Activated T-helper 1 cell treated with anti-CD3 and anti-CD28 coated beads, Interleukin-12 subunit alpha, Interleukin-12 subunit beta, Interleukin-2, Interleukin-4 antibody, amounts not matched to agents 30 ng/mL and 10 ng/mL and 1 ng/mL, durations not matched to agents 14 hours and 24 hours and 36 hours (primary cell): ENCODE measurements at regions of chrX and their contacts with region 1.

Region 1: GRCh38 chrX:54439967-54440871 is at the start of gene TSR2:
- DNase-seq: peak; percentile 75
- H3K4me3 Mint-ChIP-seq: peak within 1 kb of the TSS; percentile 96
- H3K27ac Mint-ChIP-seq: peak within 1 kb of the TSS; percentile 83
- H3K4me1 Mint-ChIP-seq: peaks cover 27% of the 10 kb centered on the region
- H3K27me3 Mint-ChIP-seq: no peaks in the 10 kb centered on the region
- total RNA-seq, gene TSR2: 43.6 and 44.1 TPM in 2 replicates

Region 2: DNA sequence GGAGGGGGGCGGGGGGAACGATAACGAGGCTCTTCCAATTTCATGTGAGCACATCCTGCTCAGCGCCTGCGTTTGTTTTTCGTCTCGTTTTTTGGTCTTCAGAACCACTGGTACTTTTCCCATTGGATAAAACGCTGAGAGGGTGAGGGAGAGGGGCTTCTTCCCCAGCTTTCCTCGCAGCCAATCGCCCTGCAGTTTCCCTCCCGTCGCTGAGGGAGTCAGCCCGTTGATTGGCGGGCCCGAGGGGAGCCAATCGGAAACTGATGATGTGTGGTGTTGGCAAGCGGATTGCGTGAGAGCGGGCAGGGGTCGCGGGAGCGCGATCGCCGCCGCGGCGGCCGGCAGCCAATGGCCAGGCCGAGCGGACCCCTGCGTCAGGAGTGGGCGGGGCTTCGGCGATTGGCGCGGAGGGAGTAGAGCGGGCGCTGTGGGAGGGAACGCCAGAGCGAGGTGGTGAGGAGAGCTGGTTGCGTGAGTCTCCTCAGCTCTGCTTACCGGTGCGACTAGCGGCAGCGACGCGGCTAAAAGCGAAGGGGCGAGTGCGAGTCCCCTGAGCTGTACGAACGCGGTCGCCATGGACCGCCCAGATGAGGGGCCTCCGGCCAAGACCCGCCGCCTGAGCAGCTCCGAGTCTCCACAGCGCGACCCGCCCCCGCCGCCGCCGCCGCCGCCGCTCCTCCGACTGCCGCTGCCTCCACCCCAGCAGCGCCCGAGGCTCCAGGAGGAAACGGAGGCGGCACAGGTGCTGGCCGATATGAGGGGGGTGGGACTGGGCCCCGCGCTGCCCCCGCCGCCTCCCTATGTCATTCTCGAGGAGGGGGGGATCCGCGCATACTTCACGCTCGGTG is 1358.1 kb before region 1 on chrX and contains the start of gene TSPYL2:
- intact Hi-C with region 1: loop called (anchors 10 kb)
- DNase-seq: peak; percentile 89
- H3K4me3 Mint-ChIP-seq: peak within 1 kb of the TSS; percentile 94
- H3K27ac Mint-ChIP-seq: peak within 1 kb of the TSS; percentile 99
- H3K4me1 Mint-ChIP-seq: peaks cover 29% of the 10 kb centered on the region
- H3K27me3 Mint-ChIP-seq: no peaks in the 10 kb centered on the region
- total RNA-seq, gene TSPYL2: 37.5 and 40.3 TPM in 2 replicates

Region 3: GRCh38 chrX:54246866-54247265 is 193.4 kb before region 1 on chrX:
- intact Hi-C with region 1: no loop called
- DNase-seq: no peak
- H3K4me3 Mint-ChIP-seq: no peak overlapping the region
- H3K27ac Mint-ChIP-seq: no peak overlapping the region
- H3K4me1 Mint-ChIP-seq: no peaks in the 10 kb centered on the region
- H3K27me3 Mint-ChIP-seq: no peaks in the 10 kb centered on the region

Region 4: DNA sequence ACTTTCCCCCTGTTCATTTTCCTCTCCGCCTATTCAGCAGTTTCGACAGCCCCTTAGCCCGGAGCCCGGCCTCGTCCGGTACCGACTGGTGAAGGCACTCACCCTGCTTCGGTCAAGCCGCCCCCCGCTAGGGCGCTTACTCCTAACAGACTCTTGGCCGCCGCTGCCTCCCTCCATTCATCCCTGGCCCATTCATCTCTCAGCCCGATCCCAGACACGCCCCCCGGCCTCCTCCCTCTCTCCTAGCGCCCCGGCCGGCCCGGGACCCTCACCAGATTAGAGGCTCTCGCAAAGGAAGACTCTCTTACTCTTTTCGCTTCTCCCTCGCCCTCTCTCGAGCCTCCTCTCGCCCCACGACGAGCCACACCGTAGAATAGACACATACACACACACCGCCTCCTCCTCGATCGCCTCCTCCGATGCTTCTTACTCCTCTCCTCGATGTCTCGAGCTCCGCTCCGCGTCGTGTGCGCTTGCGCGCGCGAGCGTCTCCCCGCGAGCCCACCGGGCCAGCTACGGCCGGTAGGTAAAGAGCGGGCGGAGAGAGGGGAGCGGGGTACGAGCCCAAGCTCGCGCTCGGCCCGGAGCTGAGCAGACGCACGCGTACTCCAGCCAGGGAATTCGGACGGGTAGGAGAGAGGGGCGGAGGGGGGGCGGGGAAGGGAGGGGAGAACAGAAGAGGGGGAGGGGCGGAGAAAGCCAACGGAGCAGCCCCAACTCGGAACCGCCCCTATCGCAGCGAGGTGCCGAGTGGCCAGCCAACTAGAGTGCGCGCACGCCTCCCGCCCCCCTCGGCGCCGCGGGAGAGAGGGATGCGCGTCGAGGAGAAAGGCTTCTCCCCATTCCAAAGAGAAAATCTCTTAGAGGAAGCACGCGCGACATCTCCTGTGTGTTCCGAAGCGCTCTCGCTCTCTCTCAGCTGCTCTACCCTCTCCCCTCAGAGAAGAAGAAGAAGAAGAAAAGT is 82.5 kb before region 1 on chrX and contains the start of gene WNK3:
- intact Hi-C with region 1: loop called (anchors 1 kb)
- DNase-seq: peak; percentile 1
- H3K4me3 Mint-ChIP-seq: peak within 1 kb of the TSS; percentile 83
- H3K27ac Mint-ChIP-seq: no peak within 1 kb of the TSS
- H3K4me1 Mint-ChIP-seq: peaks cover 13% of the 10 kb centered on the region
- H3K27me3 Mint-ChIP-seq: peaks cover 36% of the 10 kb centered on the region
- total RNA-seq, gene WNK3: 0.02 and 0.16 TPM in 2 replicates

Region 5: GRCh38 chrX:54509400-54509799 is 69.2 kb after region 1 on chrX:
- intact Hi-C with region 1: no loop called
- DNase-seq: no peak
- H3K4me3 Mint-ChIP-seq: no peak overlapping the region
- H3K27ac Mint-ChIP-seq: no peak overlapping the region
- H3K4me1 Mint-ChIP-seq: no peaks in the 10 kb centered on the region
- H3K27me3 Mint-ChIP-seq: no peaks in the 10 kb centered on the region

Region 6: GRCh38 chrX:54529552-54530357 is 89.5 kb after region 1 on chrX and contains the start of gene GNL3L:
- intact Hi-C with region 1: loop called (anchors 1 kb)
- DNase-seq: peak; percentile 69
- H3K4me3 Mint-ChIP-seq: peak within 1 kb of the TSS; percentile 95
- H3K27ac Mint-ChIP-seq: peak within 1 kb of the TSS; percentile 94
- H3K4me1 Mint-ChIP-seq: peaks cover 26% of the 10 kb centered on the region
- H3K27me3 Mint-ChIP-seq: no peaks in the 10 kb centered on the region
- total RNA-seq, gene GNL3L: 75.5 and 76.1 TPM in 2 replicates

Region 7: GRCh38 chrX:54639346-54640102 is 199.3 kb after region 1 on chrX:
- intact Hi-C with region 1: loop called (anchors 1 kb)
- DNase-seq: peak; percentile 87
- H3K4me3 Mint-ChIP-seq: peak overlapping the region; percentile 93
- H3K27ac Mint-ChIP-seq: peak overlapping the region; percentile 99
- H3K4me1 Mint-ChIP-seq: peaks cover 10% of the 10 kb centered on the region
- H3K27me3 Mint-ChIP-seq: no peaks in the 10 kb centered on the region

Region 8: GRCh38 chrX:55717521-55718497 is 1277.6 kb after region 1 on chrX and contains the start of gene RRAGB:
- intact Hi-C with region 1: loop called (anchors 2 kb)
- DNase-seq: peak; percentile 84
- H3K4me3 Mint-ChIP-seq: peak within 1 kb of the TSS; percentile 89
- H3K27ac Mint-ChIP-seq: peak within 1 kb of the TSS; percentile 73
- H3K4me1 Mint-ChIP-seq: peaks cover 36% of the 10 kb centered on the region
- H3K27me3 Mint-ChIP-seq: no peaks in the 10 kb centered on the region
- total RNA-seq, gene RRAGB: 4.4 and 6.1 TPM in 2 replicates